A549 (cell line): ENCODE measurements at regions of chr21 and their contacts with region 1.

Region 1: GRCh38 chr21:31580866-31581276 is 78.6 kb upstream of the SOD1 start:
- DNase-seq: peak; percentile 35 to 54
- ATAC-seq: peak; percentile 73 to 88
- H3K4me3 ChIP-seq: no peak overlapping the region
- H3K27ac ChIP-seq: no peak overlapping the region
- H3K4me1 ChIP-seq: no peaks in the 10 kb centered on the region
- CTCF ChIP-seq: peak; percentile 67
- EP300 ChIP-seq: no peak
- POLR2A ChIP-seq: no peak
- RAD21 ChIP-seq: peak; percentile 66 to 75

Region 2: GRCh38 chr21:31098576-31099005 is 482.3 kb before region 1 on chr21:
- CTCF ChIA-PET with region 1: interaction called, 13 read pairs
- POLR2A ChIA-PET with region 1: no interaction called
- DNase-seq: peak in 1 of 2 experiments; percentile 44
- ATAC-seq: peak; percentile 73 to 86; a peak in 5 of 6 replicates
- H3K4me3 ChIP-seq: no peak overlapping the region
- H3K27ac ChIP-seq: no peak overlapping the region
- H3K4me1 ChIP-seq: no peaks in the 10 kb centered on the region
- CTCF ChIP-seq: peak; percentile 55
- EP300 ChIP-seq: no peak
- POLR2A ChIP-seq: no peak
- RAD21 ChIP-seq: peak; percentile 61 to 66

Region 3: DNA sequence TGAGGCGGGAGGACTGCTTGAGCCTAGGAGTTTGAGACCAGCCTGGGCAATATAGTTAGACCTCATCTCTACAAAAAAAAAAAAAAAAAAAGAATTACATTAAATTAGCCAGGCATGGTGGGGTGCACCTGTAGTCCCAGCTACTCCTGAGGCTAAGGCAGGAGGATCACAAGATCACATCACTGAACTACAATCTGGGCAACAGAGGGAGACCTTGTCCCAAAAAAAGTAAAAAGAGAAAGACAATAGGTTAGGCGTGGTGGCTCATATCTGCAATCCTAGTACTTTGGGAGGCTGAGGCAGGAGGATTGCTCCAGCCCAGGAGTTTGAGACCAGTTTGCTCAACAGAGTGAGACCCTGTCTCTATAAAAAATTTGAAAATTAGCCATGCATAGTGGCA is 367.1 kb before region 1 on chr21:
- CTCF ChIA-PET with region 1: interaction called, 10 read pairs
- POLR2A ChIA-PET with region 1: no interaction called
- DNase-seq: no peak
- ATAC-seq: no peak
- H3K4me3 ChIP-seq: no peak overlapping the region
- H3K27ac ChIP-seq: no peak overlapping the region
- H3K4me1 ChIP-seq: no peaks in the 10 kb centered on the region
- CTCF ChIP-seq: no peak
- EP300 ChIP-seq: no peak
- POLR2A ChIP-seq: no peak
- RAD21 ChIP-seq: peak in 1 of 2 experiments; percentile 10; a peak in 1 of 5 replicates

Region 4: DNA sequence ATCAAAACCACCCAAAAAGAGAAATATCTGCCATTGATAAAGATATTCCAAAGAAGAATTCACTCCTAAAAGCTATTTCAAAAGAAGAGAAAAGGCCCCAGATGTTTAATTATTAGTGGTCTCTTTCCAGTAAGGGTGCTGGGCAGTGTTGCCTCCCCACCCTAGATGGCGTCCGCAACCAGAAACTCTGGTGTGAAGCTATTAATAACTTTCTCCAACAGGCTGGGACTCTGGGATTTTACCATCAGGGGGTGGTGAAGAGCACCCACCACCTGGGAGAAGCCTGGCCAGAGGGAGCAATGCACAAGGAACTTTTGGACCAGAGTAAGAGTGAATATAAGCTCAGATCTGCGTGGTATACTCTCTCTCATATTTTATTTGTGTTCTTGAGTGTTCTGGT is 121.4 kb before region 1 on chr21:
- CTCF ChIA-PET with region 1: interaction called, 13 read pairs
- POLR2A ChIA-PET with region 1: no interaction called
- DNase-seq: peak; percentile 33 to 44
- ATAC-seq: peak; percentile 62 to 84
- H3K4me3 ChIP-seq: no peak overlapping the region
- H3K27ac ChIP-seq: no peak overlapping the region
- H3K4me1 ChIP-seq: no peaks in the 10 kb centered on the region
- CTCF ChIP-seq: peak; percentile 39
- EP300 ChIP-seq: no peak
- POLR2A ChIP-seq: no peak
- RAD21 ChIP-seq: peak; percentile 28 to 44; a peak in 4 of 5 replicates

Region 5: GRCh38 chr21:31604591-31605190 is 23.8 kb after region 1 on chr21:
- CTCF ChIA-PET with region 1: interaction called, 29 read pairs
- POLR2A ChIA-PET with region 1: no interaction called
- DNase-seq: peak; percentile 42 to 55
- ATAC-seq: peak; percentile 68 to 85; a peak in 5 of 6 replicates
- H3K4me3 ChIP-seq: no peak overlapping the region
- H3K27ac ChIP-seq: no peak overlapping the region
- H3K4me1 ChIP-seq: no peaks in the 10 kb centered on the region
- CTCF ChIP-seq: peak; percentile 69
- EP300 ChIP-seq: no peak
- POLR2A ChIP-seq: no peak
- RAD21 ChIP-seq: peak; percentile 73 to 74